ENCODE measurements at regions of chr15 and their contacts with region 1.

Region 1: DNA sequence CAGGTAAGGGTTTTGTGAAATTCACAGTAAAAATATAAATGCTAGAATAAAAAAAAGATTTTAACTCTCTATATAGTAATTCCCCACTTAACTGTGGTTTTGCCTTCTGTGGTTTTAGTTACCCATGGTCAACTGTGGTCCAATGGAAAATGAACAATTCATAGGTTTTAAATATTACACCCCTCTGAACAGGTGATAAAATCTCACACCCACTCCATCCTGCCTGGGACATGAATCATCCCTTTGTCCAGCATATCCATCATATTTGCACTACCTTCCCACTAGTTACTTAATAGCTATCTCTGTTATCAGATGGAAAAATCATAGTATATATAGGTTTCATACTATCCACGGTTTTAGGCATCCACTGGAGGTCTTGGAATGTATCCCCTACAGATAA is 49.2 kb downstream of the HDGFL3 start:
- DNase-seq: no peak
- ATAC-seq: no peak
- H3K4me3 ChIP-seq: no peak overlapping the region
- H3K4me3 Mint-ChIP-seq: no peak overlapping the region
- H3K27ac ChIP-seq: no peak overlapping the region
- H3K27ac Mint-ChIP-seq: no peak overlapping the region
- H3K4me1 ChIP-seq: peaks cover 0 to 5% of the 10 kb centered on the region in 2 experiments
- H3K4me1 Mint-ChIP-seq: peaks cover 6 to 7% (median 7%) of the 10 kb centered on the region in 3 donors
- H3K27me3 ChIP-seq: peaks cover 0 to 4% of the 10 kb centered on the region in 2 experiments
- H3K27me3 Mint-ChIP-seq: peaks cover 5 to 19% of the 10 kb centered on the region in 2 donors

Region 2: GRCh38 chr15:83066734-83067637 is 91.4 kb before region 1 on chr15 and contains the start of gene BTBD1:
- CTCF ChIA-PET with region 1: no interaction called
- POLR2A ChIA-PET with region 1: interaction called in 1 of 2 experiments, 10 read pairs
- DNase-seq: peak; percentile 46 to 85 (median 66)
- ATAC-seq: peak; percentile 82 to 87 (median 86)
- H3K4me3 ChIP-seq: peak within 1 kb of the TSS; percentile 82 to 91
- H3K4me3 Mint-ChIP-seq: peak within 1 kb of the TSS in 2 of 3 donors; percentile 69 to 87
- H3K27ac ChIP-seq: peak within 1 kb of the TSS; percentile 58
- H3K27ac Mint-ChIP-seq: peak within 1 kb of the TSS; percentile 77 to 84
- H3K4me1 ChIP-seq: peaks cover 17 to 21% of the 10 kb centered on the region in 2 experiments
- H3K4me1 Mint-ChIP-seq: peaks cover 7 to 14% (median 8%) of the 10 kb centered on the region in 3 donors
- H3K27me3 ChIP-seq: no peaks in the 10 kb centered on the region
- H3K27me3 Mint-ChIP-seq: no peaks in the 10 kb centered on the region
- total RNA-seq, gene BTBD1: 34.8 to 38.4 (median 36.2) TPM

Region 3: DNA sequence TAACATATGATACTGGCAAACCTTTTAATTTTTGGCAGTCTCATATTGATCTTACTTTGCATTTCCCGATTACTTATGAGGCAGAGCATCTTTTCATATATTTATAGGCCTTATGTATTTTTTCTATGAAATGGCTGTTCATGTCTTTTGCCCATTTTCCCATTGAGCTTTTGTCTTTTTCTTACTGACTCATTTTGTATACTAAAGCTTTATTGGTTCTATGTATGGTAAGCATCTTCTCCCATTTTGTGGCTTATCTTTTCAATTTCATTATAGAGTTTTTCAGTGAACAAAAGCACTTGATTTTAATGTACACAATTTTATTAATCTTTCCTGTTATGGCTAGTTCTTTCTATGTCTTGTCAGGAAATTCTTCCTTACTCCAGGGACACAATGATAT is 32.1 kb after region 1 on chr15:
- CTCF ChIA-PET with region 1: interaction called in 1 of 2 experiments, 11 read pairs
- POLR2A ChIA-PET with region 1: no interaction called
- DNase-seq: no peak
- ATAC-seq: no peak
- H3K4me3 ChIP-seq: no peak overlapping the region
- H3K4me3 Mint-ChIP-seq: no peak overlapping the region
- H3K27ac ChIP-seq: no peak overlapping the region
- H3K27ac Mint-ChIP-seq: no peak overlapping the region
- H3K4me1 ChIP-seq: no peaks in the 10 kb centered on the region
- H3K4me1 Mint-ChIP-seq: no peaks in the 10 kb centered on the region
- H3K27me3 ChIP-seq: no peaks in the 10 kb centered on the region
- H3K27me3 Mint-ChIP-seq: peaks cover 9 to 15% of the 10 kb centered on the region in 2 donors